Spleen (tissue), 13 donors: ENCODE measurements at regions of chr20 and their contacts with region 1.

Region 1: GRCh38 chr20:51497542-51498478 is 44.7 kb downstream of the NFATC2 start:
- DNase-seq: peak; percentile 80
- H3K4me3 ChIP-seq: peak overlapping the region in 1 of 8 donors; percentile 32
- H3K27ac ChIP-seq: peak overlapping the region; percentile 46 to 74 (median 67)
- H3K4me1 ChIP-seq: peaks cover 48 to 98% (median 86%) of the 10 kb centered on the region in 6 donors
- H3K27me3 ChIP-seq: no peaks in the 10 kb centered on the region
- CTCF ChIP-seq: no peak
- POLR2A ChIP-seq: no peak

Region 2: GRCh38 chr20:51541189-51542032 is 43.6 kb after region 1 on chr20:
- intact Hi-C with region 1: loop called (anchors 10 kb)
- DNase-seq: peak; percentile 89
- H3K4me3 ChIP-seq: peak overlapping the region; percentile 47 to 77 (median 62)
- H3K27ac ChIP-seq: peak overlapping the region; percentile 80 to 93 (median 92)
- H3K4me1 ChIP-seq: peaks cover 12 to 71% (median 51%) of the 10 kb centered on the region in 6 donors
- H3K27me3 ChIP-seq: peaks cover 0 to 18% (median 0%) of the 10 kb centered on the region in 7 donors
- CTCF ChIP-seq: no peak
- POLR2A ChIP-seq: no peak

Region 3: GRCh38 chr20:51667002-51667408 is 169.2 kb after region 1 on chr20:
- intact Hi-C with region 1: no loop called
- DNase-seq: peak; percentile 4
- H3K4me3 ChIP-seq: no peak overlapping the region
- H3K27ac ChIP-seq: no peak overlapping the region
- H3K4me1 ChIP-seq: peaks cover 0 to 26% (median 1%) of the 10 kb centered on the region in 6 donors
- H3K27me3 ChIP-seq: no peaks in the 10 kb centered on the region
- CTCF ChIP-seq: no peak
- POLR2A ChIP-seq: no peak